ENCODE measurements at regions of chr17 and their contacts with region 1.

Region 1: DNA sequence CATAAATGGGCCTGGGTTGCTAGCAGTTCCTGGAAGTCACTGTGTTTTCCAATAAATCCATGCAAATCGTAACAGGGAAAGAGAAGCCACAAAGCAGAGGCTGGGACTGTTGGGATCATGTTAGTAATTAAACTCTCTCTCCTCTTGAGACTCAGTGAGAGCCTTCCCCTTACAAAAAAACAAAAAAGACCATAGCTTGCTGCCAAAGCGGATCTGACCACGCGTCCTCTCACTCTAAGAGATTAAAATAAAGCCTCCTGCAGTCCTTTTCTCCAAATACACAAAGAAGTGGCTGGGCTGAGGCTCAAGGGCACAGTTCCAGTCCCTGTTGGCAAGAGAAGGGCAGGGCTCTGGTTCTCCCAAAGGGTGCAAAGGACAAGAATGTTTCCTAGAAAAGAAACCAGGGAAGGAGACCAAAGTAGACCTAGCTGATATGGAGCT is 38.5 kb downstream of the PIGL start:
- DNase-seq: no peak
- ATAC-seq: peak; percentile 86

Region 2: DNA sequence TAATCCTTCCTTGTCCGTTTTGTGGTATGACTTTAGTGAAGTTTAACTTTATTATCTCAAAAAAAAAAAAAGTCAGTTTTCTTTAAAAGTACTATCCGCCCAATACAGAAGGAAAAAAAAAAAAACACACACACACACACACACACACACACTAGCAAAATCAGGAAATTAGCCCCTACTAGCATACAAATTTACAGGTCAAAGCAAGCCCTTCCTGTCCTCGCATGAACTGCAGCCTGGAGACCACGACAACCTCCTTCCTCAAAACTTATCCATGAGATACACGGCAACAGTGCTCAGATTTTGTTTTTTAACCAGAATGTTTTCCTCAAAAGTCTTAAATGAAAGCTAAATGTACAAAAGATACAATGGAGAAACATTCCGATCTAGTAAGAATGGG is 56.4 kb before region 1 on chr17:
- intact Hi-C with region 1: no loop called
- DNase-seq: no peak
- ATAC-seq: no peak

Region 3: DNA sequence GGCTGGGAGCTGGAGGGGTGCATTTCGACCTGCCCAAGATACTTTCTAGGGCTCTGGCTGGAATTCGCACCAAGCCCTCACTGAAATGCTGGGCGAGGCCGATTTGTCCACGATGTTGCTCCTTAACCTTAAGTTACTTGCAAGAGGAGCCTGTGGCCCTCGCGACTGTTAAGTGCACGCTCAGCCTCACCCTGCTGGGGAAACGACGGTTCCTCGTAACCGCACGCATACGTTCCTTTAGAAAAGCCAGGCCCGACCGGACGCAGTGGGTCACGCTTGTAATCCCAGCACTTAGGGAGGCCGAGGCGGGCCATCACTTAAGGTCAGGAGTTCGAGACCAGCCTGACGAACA is 39.6 kb before region 1 on chr17:
- intact Hi-C with region 1: loop called (anchors 1 kb)
- DNase-seq: peak; percentile 73
- ATAC-seq: peak; percentile 7

Region 4: GRCh38 chr17:16281351-16281750 is 25.9 kb after region 1 on chr17:
- intact Hi-C with region 1: no loop called
- DNase-seq: no peak
- ATAC-seq: no peak

Measured in Right ventricle myocardium inferior (tissue), 1 donor.